PC-3 (cell line): ENCODE measurements at regions of chr17 and their contacts with region 1.

Region 1: DNA sequence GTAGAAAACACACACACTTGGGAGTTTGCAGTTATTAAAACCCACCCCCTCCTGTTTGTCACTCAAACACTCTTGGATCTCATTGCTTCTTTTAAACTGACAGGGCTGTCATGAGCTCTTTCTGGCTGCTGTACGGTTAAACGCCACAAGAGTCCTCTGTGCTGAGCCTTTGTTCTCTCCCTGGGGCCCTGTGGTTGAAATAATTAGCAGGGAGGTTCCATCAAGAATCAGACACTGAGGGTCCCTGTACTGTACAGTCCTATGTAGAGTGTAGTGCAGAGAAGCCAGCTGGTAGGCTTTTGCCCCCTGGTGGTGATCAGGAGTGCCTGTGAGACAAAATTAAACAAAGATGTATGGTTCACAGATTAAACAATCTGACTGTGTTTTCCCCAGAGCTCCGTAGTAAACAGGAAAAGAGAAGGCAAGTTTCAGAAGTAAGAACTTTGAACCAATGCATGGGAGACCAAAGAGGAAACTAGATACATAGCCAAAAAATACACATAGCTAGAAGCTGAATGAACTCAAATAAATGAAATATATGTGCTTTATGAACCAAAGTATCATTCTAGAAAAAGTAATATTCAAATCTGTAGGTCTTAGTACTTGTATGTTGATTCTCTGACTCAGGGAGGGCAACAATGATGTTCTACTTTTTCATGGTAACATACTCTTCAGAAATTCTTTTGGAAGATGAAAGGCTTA is 1.4 kb upstream of the SSH2 start:
- DNase-seq: peak; percentile 62
- ATAC-seq: peak; percentile 57
- H3K4me3 ChIP-seq: peak overlapping the region; percentile 85
- H3K27ac ChIP-seq: no peak overlapping the region
- H3K4me1 ChIP-seq: peaks cover 23% of the 10 kb centered on the region
- H3K27me3 ChIP-seq: no peaks in the 10 kb centered on the region
- CTCF ChIP-seq: peak; percentile 89

Region 2: DNA sequence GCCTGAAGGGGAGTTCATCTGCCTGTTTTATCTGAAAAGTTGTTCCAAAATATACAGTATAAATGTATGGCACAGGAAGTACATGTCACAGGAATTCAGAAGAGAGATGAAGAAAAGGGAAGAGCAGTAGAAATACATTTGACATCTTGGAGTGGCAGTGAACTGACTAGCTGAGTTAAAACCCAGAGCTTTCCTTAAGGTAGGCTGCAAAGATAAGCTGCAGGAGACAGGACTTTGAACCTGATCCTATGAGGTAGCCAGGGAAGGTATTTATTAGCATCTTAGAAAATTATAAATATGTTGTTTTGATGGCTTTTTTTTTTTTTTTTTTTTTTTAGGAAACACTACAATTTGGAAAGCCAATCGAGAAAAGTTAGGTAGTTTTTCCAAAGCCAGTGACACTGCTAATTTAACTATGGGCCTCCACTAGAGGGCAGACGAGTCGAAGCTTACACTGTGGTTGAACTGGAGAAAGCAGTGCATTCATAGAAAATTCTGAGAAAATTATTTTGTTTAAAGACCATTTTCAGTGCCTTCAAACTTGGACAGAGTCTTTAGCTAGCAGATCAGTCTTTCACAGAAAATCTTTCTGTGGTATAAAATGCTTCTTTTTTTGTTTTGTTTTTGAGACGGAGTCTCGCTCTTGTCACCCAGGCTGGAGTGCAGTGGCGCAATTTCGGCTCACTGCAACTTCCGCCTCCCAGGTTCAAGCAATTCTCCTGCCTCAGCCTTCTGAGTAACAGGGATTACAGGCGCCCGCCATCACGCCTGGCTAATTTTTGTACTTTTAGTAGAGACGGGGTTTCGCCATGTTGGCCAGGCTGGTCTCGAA is 123.6 kb before region 1 on chr17:
- CTCF ChIA-PET with region 1: interaction called, 43 read pairs
- POLR2A ChIA-PET with region 1: no interaction called
- intact Hi-C with region 1: loop called (anchors 1 kb)
- DNase-seq: peak; percentile 63
- ATAC-seq: no peak; the same call in 1 of the 2 replicates
- H3K4me3 ChIP-seq: no peak overlapping the region
- H3K27ac ChIP-seq: no peak overlapping the region
- H3K4me1 ChIP-seq: no peaks in the 10 kb centered on the region
- H3K27me3 ChIP-seq: no peaks in the 10 kb centered on the region
- CTCF ChIP-seq: peak; percentile 68

Region 3: GRCh38 chr17:29977836-29978235 is 46.5 kb after region 1 on chr17:
- CTCF ChIA-PET with region 1: no interaction called
- POLR2A ChIA-PET with region 1: interaction called, 19 read pairs
- intact Hi-C with region 1: no loop called
- DNase-seq: no peak
- ATAC-seq: no peak
- H3K4me3 ChIP-seq: no peak overlapping the region
- H3K27ac ChIP-seq: no peak overlapping the region
- H3K4me1 ChIP-seq: no peaks in the 10 kb centered on the region
- H3K27me3 ChIP-seq: no peaks in the 10 kb centered on the region
- CTCF ChIP-seq: no peak

Region 4: DNA sequence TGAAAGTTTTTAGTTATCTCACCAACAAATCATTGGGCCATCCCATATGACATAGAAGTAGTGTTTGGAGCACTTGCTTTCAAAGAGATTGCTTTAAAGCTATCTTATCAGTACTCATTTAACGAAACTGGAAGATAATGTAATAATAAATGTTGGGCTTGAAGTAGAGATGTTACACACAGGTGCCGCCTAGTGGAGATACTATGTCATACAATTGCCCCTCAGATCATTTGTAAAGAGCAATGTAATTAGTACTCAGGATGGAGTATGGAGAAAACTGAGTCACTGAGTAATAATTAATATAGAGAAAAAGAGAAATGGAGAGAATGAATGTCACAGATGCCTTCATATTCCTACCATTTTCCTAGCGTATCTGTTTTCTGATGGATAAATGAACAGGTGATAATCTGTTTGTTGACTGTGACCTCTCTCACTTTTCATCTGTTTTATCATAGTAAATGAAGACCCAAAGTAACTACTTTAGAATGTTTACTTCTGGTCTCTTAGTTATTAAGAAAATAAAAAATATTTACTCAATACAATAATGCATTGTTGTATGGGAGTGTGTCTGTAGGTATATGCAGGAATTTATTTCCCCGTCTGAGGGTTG is 90.4 kb after region 1 on chr17:
- CTCF ChIA-PET with region 1: no interaction called
- POLR2A ChIA-PET with region 1: no interaction called
- intact Hi-C with region 1: loop called (anchors 1 kb)
- DNase-seq: peak; percentile 54
- ATAC-seq: no peak
- H3K4me3 ChIP-seq: no peak overlapping the region
- H3K27ac ChIP-seq: no peak overlapping the region
- H3K4me1 ChIP-seq: no peaks in the 10 kb centered on the region
- H3K27me3 ChIP-seq: no peaks in the 10 kb centered on the region
- CTCF ChIP-seq: peak; percentile 76

Region 5: DNA sequence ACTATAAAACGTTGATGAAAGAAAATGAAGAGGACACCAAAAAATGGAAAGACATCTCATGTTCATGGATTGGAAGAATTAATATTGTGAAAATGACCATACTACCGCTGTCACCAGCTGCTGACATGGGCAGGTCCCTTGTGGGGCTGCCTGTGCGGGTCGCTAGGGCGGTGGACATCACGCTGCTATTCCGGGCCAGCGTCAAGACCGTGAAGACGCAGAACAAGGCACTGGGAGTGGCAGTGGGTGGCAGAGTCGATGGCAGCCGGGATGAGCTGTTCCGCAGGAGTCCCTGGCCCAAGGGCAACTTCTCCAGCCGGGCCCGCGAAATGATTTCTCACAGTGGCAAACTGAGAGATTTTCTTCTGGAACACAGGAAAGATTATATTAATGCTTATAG is 137.1 kb after region 1 on chr17:
- CTCF ChIA-PET with region 1: no interaction called
- POLR2A ChIA-PET with region 1: no interaction called
- intact Hi-C with region 1: no loop called
- DNase-seq: no peak
- ATAC-seq: no peak
- H3K4me3 ChIP-seq: no peak overlapping the region
- H3K27ac ChIP-seq: no peak overlapping the region
- H3K4me1 ChIP-seq: no peaks in the 10 kb centered on the region
- H3K27me3 ChIP-seq: peaks cover 15% of the 10 kb centered on the region
- CTCF ChIP-seq: no peak

Region 6: GRCh38 chr17:30376621-30377452 is 445.5 kb after region 1 on chr17:
- CTCF ChIA-PET with region 1: interaction called, 12 read pairs
- POLR2A ChIA-PET with region 1: no interaction called
- intact Hi-C with region 1: no loop called
- DNase-seq: peak; percentile 55
- ATAC-seq: peak; percentile 21
- H3K4me3 ChIP-seq: no peak overlapping the region
- H3K27ac ChIP-seq: peak overlapping the region; percentile 12
- H3K4me1 ChIP-seq: peaks cover 40% of the 10 kb centered on the region
- H3K27me3 ChIP-seq: no peaks in the 10 kb centered on the region
- CTCF ChIP-seq: no peak